ENCODE measurements at regions of chr2 and their contacts with region 1.

Region 1: DNA sequence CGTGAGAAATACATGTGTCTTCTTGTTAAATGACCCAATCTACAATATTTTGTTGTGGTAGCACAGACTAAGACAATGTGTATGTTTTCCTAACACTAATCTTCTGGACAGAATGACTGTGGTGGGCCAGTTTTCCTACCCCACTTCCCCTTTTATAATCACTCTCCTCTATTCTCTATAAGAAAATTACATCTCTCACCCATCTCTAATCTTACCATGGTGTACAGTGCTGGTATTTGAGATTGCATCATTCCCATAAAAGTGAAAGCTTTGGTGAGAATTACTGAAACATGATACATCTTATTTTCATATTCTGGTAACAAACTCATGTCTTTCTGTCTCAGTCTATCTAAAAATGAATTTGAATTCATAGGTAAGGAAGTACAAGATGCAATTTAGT is 40.5 kb downstream of the CAVIN2 start:
- DNase-seq: no peak
- ATAC-seq: no peak
- H3K4me3 Mint-ChIP-seq: no peak overlapping the region
- H3K27ac Mint-ChIP-seq: no peak overlapping the region
- H3K4me1 Mint-ChIP-seq: no peaks in the 10 kb centered on the region
- H3K27me3 Mint-ChIP-seq: peaks cover 2% of the 10 kb centered on the region
- CTCF ChIP-seq: no peak

Region 2: DNA sequence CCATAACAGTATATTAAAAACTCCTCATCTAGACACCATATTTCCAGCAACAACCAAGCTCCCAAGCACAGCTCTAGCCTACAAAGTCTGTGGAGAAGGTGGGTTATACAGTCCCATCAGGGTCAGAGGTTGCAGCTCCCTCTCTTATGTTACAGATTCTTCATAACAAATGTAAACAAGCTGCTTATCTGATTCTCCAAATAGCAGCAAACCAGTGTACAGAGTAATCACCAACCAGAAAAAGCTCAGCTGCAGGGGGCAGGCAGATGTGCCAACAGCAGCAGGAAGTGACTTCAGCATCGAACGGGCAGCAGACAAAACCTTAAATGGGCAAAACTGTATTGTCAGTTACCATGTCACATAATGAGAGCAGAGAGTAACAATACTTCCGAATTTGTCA is 181.4 kb before region 1 on chr2:
- CTCF ChIA-PET with region 1: no interaction called
- POLR2A ChIA-PET with region 1: no interaction called
- intact Hi-C with region 1: no loop called
- DNase-seq: no peak
- ATAC-seq: peak; percentile 73
- H3K4me3 Mint-ChIP-seq: no peak overlapping the region
- H3K27ac Mint-ChIP-seq: peak overlapping the region; percentile 33
- H3K4me1 Mint-ChIP-seq: peaks cover 38% of the 10 kb centered on the region
- H3K27me3 Mint-ChIP-seq: no peaks in the 10 kb centered on the region
- CTCF ChIP-seq: no peak

Region 3: GRCh38 chr2:191786694-191787093 is 19.7 kb before region 1 on chr2:
- CTCF ChIA-PET with region 1: no interaction called
- POLR2A ChIA-PET with region 1: no interaction called
- intact Hi-C with region 1: loop called (anchors 2 kb)
- DNase-seq: no peak
- ATAC-seq: no peak
- H3K4me3 Mint-ChIP-seq: no peak overlapping the region
- H3K27ac Mint-ChIP-seq: no peak overlapping the region
- H3K4me1 Mint-ChIP-seq: peaks cover 7% of the 10 kb centered on the region
- H3K27me3 Mint-ChIP-seq: peaks cover 10% of the 10 kb centered on the region
- CTCF ChIP-seq: no peak

Region 4: GRCh38 chr2:191818725-191819350 is 12.4 kb after region 1 on chr2:
- CTCF ChIA-PET with region 1: no interaction called
- POLR2A ChIA-PET with region 1: no interaction called
- intact Hi-C with region 1: no loop called
- DNase-seq: no peak
- ATAC-seq: no peak
- H3K4me3 Mint-ChIP-seq: no peak overlapping the region
- H3K27ac Mint-ChIP-seq: no peak overlapping the region
- H3K4me1 Mint-ChIP-seq: no peaks in the 10 kb centered on the region
- H3K27me3 Mint-ChIP-seq: peaks cover 5% of the 10 kb centered on the region
- CTCF ChIP-seq: no peak

Region 5: DNA sequence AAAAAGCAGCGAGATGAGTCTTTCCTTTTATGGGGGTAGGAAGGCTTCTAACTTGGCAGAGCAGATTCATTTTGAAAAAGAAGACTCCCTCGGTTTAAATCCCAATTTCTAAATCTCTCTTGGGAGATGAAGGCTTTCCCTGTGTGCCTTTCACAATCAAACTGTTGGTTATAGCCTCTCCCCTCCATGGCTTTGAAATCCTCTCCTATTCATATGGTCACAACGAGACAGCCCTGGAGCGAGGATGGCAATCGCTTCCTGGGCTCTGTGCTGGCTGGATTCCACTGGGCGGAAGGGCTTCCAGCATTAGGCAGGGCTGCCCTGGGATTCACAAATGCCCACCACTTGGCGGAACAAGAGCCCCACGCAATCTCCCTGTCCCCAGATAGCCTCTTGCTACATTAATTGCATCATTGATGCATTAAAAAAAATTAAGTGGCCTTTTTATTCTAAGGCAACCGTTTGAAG is 38.9 kb after region 1 on chr2:
- CTCF ChIA-PET with region 1: no interaction called
- POLR2A ChIA-PET with region 1: no interaction called
- intact Hi-C with region 1: no loop called
- DNase-seq: no peak
- ATAC-seq: no peak
- H3K4me3 Mint-ChIP-seq: no peak overlapping the region
- H3K27ac Mint-ChIP-seq: no peak overlapping the region
- H3K4me1 Mint-ChIP-seq: no peaks in the 10 kb centered on the region
- H3K27me3 Mint-ChIP-seq: peaks cover 11% of the 10 kb centered on the region
- CTCF ChIP-seq: no peak